IMR-90 (cell line): ENCODE measurements at regions of chr3 and their contacts with region 1.

Region 1: DNA sequence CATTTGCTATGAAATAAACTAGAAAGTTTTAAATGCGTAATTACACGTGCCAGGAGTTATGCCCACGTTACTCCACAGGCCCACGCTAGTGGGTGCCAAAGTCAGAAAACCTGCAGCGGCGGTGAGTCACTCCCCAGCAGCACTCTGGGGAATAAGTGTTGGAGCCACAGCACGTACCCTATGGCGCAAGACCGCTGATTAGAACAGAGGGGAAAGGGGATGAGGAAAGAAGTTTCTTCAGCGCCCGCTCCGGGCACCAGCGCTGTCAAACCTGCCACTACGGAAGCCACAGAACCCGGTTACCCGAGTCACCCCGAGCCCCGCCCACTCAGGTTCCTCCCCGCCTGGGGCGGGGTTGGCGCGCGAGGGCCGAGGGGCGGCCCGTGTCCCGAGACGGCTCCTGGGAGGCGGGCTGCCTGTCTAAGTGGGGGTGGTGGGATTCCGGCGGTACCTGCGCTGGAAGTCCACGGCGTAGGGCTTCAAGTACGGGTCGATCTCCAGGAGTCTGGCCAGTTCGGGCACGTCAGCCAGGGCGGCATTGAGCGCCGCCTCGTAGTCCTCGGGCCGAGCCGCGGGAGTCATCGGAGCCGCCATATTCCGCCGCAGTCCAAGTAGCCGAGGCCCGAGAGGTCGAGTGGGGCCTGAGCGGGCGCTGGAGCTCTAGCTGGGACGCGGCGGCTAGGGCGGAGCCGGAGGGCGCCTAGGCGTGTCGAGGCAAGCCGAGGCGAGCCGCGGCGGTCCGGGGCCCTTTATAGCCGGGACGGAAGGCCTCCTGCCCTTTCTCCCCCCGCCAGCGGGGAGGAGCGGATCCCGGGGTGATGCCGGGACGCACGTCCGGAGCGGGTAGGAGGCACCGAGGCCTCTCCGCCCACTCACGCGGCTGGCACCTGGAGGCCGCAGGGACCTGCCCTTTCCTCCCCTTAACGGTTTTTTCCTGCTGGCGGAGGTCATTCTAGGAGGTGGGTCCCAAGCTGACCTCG is at the start of gene GBE1:
- DNase-seq: peak; percentile 93
- ATAC-seq: peak; percentile 90
- H3K4me3 ChIP-seq: peak within 1 kb of the TSS; percentile 79
- H3K27ac ChIP-seq: peak within 1 kb of the TSS; percentile 99
- H3K4me1 ChIP-seq: peaks cover 8% of the 10 kb centered on the region
- H3K27me3 ChIP-seq: no peaks in the 10 kb centered on the region
- CTCF ChIP-seq: peak; percentile 46
- POLR2A ChIP-seq: peak; percentile 94
- RAD21 ChIP-seq: peak; percentile 30; the same call in 1 of the 2 replicates
- total RNA-seq, gene GBE1: 90.3 and 122 TPM in 2 replicates

Region 2: DNA sequence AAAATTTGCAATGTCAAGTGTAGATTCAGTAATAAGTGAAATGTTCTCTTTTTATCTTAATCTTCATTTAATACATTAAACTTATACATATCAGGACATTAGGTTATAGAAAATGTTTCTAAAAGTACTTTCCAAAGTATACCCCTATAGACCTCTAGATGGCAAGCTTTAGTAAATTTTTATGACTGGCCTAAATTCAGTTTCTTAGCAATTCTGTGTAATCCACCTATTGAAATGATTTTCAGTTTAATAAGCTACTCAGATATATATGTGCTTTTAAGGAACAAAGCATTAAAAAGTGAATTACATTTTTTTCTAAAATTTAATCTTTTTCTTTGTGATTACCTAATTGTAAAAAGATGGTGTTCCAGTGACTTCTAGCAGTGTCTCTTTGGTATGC is 342.0 kb before region 1 on chr3:
- CTCF ChIA-PET with region 1: no interaction called
- POLR2A ChIA-PET with region 1: no interaction called
- dilution Hi-C with region 1: no loop called
- in situ Hi-C with region 1: no loop called
- intact Hi-C with region 1: loop called (anchors 5 kb)
- DNase-seq: peak; percentile 22
- ATAC-seq: peak; percentile 72
- H3K4me3 ChIP-seq: no peak overlapping the region
- H3K27ac ChIP-seq: no peak overlapping the region
- H3K4me1 ChIP-seq: no peaks in the 10 kb centered on the region
- H3K27me3 ChIP-seq: no peaks in the 10 kb centered on the region
- CTCF ChIP-seq: peak; percentile 55
- POLR2A ChIP-seq: no peak
- RAD21 ChIP-seq: peak; percentile 40

Region 3: GRCh38 chr3:81490541-81491288 is 270.5 kb before region 1 on chr3:
- CTCF ChIA-PET with region 1: no interaction called
- POLR2A ChIA-PET with region 1: no interaction called
- dilution Hi-C with region 1: no loop called
- in situ Hi-C with region 1: no loop called
- intact Hi-C with region 1: loop called (anchors 2 kb)
- DNase-seq: peak; percentile 89
- ATAC-seq: peak; percentile 85
- H3K4me3 ChIP-seq: no peak overlapping the region
- H3K27ac ChIP-seq: no peak overlapping the region
- H3K4me1 ChIP-seq: 0 out of 2 replicates have a peak, but pooled peaks cover 2% of the 10 kb centered on the region
- H3K27me3 ChIP-seq: no peaks in the 10 kb centered on the region
- CTCF ChIP-seq: peak; percentile 78
- POLR2A ChIP-seq: no peak
- RAD21 ChIP-seq: peak; percentile 62

Region 4: DNA sequence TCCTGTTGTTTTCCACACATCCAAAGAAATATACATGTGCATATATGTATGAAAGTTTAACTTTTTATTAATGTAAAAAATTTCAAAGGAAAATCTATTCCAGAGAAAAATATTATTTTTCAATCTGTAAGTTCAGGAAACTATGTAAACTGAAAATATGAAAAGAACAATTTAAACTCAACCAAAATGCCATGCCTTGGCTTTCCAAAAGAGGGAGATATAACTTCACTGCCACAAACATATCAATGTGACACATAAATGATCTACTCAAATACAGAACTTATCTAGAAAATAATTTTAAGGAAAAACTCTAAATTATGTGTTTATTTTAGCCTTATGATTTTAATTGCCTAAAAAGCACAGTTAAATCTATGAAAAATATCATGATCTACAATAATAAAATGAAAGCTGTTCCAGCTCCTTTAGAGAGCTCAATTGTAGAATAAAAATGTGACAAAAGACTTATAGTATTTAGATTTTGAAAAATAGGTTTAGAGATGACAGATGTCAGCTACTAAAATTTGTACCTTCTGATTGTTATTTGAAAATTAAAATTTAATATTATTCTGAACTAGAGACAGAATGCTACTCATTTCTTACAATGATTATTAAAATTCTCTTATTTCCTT is 94.6 kb before region 1 on chr3:
- CTCF ChIA-PET with region 1: interaction called, 9 read pairs
- POLR2A ChIA-PET with region 1: no interaction called
- dilution Hi-C with region 1: no loop called
- in situ Hi-C with region 1: no loop called
- intact Hi-C with region 1: loop called (anchors 2 kb)
- DNase-seq: peak; percentile 41
- ATAC-seq: no peak; the same call in 1 of the 2 replicates
- H3K4me3 ChIP-seq: no peak overlapping the region
- H3K27ac ChIP-seq: no peak overlapping the region
- H3K4me1 ChIP-seq: no peaks in the 10 kb centered on the region; the same call in 1 of the 2 replicates
- H3K27me3 ChIP-seq: no peaks in the 10 kb centered on the region
- CTCF ChIP-seq: peak; percentile 85
- POLR2A ChIP-seq: no peak
- RAD21 ChIP-seq: peak; percentile 89

Region 5: DNA sequence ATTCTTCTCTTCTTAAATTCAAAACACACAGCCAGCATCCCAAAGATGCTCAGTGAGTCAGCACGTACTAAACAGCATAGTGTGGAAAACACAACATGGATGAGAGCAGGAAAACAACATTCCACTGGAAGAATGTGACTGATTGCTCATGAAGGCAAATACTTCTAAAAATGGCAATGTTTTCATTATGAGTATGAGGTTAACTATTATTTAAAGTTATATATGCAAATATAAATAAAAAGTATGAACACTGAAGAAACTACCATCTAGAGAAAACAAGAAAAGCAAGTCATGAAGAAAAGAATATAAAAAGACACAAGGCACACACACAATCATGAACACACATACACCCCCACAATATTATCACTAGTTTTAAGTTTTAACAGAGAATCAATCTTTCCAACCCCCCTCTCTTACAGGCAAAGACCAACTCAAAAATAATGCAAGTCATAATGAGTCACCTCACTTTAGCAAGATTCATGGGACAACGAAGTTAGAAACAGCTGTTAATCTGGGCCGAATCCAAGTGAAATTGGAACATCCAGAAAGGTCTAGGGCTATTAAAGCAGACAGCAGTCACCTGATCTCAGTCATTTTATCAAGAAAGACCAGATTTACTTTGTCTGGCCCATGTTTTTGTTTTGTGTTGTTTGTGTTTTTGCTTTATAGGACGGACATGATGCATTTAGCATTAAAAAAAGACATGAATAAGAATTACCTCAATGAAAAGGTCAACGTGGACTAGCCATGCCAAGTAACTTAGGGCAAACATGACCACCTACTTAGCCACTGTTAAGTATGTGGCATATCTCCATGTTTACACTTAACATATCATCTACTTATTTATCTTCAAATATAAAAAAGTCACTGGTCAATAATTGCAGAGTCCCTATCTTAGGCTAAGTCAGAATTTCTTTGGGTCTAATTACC is 17.9 kb before region 1 on chr3:
- CTCF ChIA-PET with region 1: no interaction called
- POLR2A ChIA-PET with region 1: no interaction called
- dilution Hi-C with region 1: no loop called
- in situ Hi-C with region 1: no loop called
- intact Hi-C with region 1: loop called (anchors 1 kb)
- DNase-seq: peak; percentile 98
- ATAC-seq: peak; percentile 80
- H3K4me3 ChIP-seq: no peak overlapping the region
- H3K27ac ChIP-seq: peak overlapping the region; percentile 58; the same call in 1 of the 2 replicates
- H3K4me1 ChIP-seq: peaks cover 17% of the 10 kb centered on the region
- H3K27me3 ChIP-seq: no peaks in the 10 kb centered on the region
- CTCF ChIP-seq: no peak
- POLR2A ChIP-seq: no peak
- RAD21 ChIP-seq: no peak